PC-3 (cell line): ENCODE measurements at regions of chr20 and their contacts with region 1.

Region 1: DNA sequence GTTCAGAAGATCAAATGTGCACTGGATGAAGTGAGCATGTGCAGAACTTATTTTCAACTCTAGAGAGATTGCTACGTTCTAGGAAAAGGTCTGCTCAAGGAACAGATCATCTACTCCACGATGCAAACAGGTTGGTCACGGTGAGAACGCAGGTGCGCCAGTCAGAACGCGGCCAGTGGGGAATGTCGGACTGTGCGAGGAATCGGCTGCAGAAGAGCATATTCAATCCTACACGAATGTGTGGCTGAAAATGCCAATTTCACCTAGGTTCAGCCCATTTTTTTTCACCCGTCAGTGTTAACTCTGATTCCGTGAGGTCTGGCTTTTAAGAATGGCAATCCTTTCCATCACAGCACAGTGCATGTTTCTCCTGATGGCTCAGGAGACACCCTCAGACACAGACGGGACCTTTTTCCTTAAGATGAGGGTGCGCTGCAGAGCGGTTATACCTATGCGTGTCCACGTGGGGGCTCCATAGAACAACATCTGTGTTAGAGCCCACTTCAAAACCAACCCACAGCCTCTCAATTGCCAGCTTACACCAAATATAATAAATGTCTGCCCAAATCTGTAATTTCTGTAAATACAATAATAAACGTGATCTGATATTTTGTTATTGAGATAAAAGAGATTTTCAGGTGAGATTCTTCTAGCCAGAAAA is 250.4 kb downstream of the FOXA2 start:
- DNase-seq: peak; percentile 84
- ATAC-seq: peak; percentile 91
- H3K4me3 ChIP-seq: no peak overlapping the region
- H3K27ac ChIP-seq: no peak overlapping the region
- H3K4me1 ChIP-seq: no peaks in the 10 kb centered on the region
- H3K27me3 ChIP-seq: peaks cover 51% of the 10 kb centered on the region
- CTCF ChIP-seq: peak; percentile 94

Region 2: GRCh38 chr20:22371843-22372242 is 37.8 kb after region 1 on chr20:
- CTCF ChIA-PET with region 1: no interaction called
- POLR2A ChIA-PET with region 1: no interaction called
- intact Hi-C with region 1: no loop called
- DNase-seq: no peak
- ATAC-seq: no peak
- H3K4me3 ChIP-seq: no peak overlapping the region
- H3K27ac ChIP-seq: no peak overlapping the region
- H3K4me1 ChIP-seq: peaks cover 59% of the 10 kb centered on the region
- H3K27me3 ChIP-seq: no peaks in the 10 kb centered on the region
- CTCF ChIP-seq: no peak

Region 3: GRCh38 chr20:22890594-22891300 is 556.7 kb after region 1 on chr20:
- CTCF ChIA-PET with region 1: no interaction called
- POLR2A ChIA-PET with region 1: no interaction called
- intact Hi-C with region 1: no loop called
- DNase-seq: no peak
- ATAC-seq: no peak
- H3K4me3 ChIP-seq: no peak overlapping the region
- H3K27ac ChIP-seq: no peak overlapping the region
- H3K4me1 ChIP-seq: no peaks in the 10 kb centered on the region
- H3K27me3 ChIP-seq: no peaks in the 10 kb centered on the region
- CTCF ChIP-seq: no peak

Region 4: DNA sequence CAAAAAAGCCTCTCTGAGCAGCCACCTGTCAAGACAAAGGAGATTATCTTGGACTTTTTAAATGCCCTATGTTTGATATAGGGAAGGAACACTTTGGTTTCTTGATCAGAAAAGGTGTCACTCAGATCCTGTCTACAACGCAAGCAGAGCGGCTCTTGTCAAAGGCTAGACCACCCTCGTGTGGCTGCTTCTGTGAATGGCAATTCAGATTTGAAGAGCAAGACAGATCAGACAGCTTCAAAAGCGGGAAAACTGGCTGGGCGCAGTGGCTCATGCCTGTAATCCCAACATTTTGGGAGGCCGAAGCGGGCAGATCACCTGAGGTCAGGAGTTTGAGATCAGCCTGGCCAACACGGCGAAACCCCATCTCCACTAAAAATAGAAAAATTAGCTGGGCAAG is 1006.5 kb after region 1 on chr20:
- CTCF ChIA-PET with region 1: no interaction called
- POLR2A ChIA-PET with region 1: no interaction called
- intact Hi-C with region 1: loop called (anchors 1 kb)
- DNase-seq: peak; percentile 82
- ATAC-seq: peak; percentile 87
- H3K4me3 ChIP-seq: no peak overlapping the region
- H3K27ac ChIP-seq: no peak overlapping the region
- H3K4me1 ChIP-seq: no peaks in the 10 kb centered on the region
- H3K27me3 ChIP-seq: no peaks in the 10 kb centered on the region; the same call in 1 of the 2 replicates
- CTCF ChIP-seq: peak; percentile 76